ENCODE measurements at regions of chr14 and their contacts with region 1.

Region 1: DNA sequence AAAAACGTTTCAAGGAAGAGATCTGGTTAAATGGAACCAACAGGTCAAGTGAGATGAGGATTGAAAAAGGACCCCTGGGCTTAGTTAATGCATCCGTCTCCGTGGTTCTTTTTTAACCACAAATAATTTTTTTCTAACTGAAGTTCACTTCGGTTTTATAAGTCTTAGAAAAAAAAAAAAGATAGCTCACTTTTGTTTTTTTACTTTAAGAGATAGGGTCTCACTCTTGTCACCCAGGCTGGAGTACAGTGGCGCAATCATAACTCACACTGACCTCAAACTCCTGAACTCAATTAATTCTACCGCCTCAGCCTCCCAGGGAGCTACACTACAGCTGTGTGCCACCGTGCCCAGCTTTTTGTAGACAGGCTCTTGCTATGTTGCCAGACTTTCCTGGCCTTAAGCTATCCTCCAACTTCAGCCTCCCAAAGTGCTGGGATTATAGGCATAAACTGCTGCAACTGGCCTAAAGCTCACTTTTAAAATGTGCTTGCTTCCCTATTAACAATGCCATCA is 11.8 kb downstream of the HNRNPC start:
- H3K4me3 ChIP-seq: no peak overlapping the region
- H3K27ac ChIP-seq: no peak overlapping the region
- H3K4me1 ChIP-seq: peaks cover 8% of the 10 kb centered on the region; the same call in 1 of the 2 replicates
- CTCF ChIP-seq: no peak

Region 2: DNA sequence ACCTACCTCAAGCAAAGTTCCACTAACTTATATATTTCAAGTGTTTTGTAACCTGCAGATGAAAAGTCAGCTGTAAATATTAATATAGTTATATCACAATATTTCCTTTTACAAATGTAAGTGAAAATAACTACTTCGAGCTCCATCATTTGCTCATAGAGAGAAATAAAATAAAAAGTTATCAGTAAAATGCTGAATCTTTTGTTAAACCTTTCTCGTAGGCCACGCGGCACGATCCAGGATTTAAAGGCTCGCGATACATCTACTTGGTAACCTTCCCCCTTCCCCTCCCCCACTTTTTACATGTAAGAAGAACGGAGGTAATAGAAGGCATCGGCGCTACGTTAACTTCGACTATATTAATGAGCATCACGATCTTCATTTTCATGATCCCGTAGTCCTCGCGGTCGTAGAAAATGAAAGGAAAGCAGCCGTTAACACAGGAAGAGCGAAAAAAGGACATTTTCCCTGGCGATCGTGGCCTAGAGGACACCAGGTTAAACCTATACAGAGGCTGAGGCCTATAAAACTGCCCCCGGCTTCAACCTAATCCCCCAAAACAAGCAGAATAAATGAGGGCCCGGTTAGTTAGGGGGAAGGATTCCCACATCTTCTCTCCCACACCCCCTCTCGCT is 11.3 kb after region 1 on chr14:
- CTCF ChIA-PET with region 1: interaction called, 8 read pairs
- POLR2A ChIA-PET with region 1: interaction called, 13 read pairs
- H3K4me3 ChIP-seq: peak overlapping the region; percentile 90
- H3K27ac ChIP-seq: peak overlapping the region; percentile 85
- H3K4me1 ChIP-seq: peaks cover 20% of the 10 kb centered on the region
- CTCF ChIP-seq: no peak